HEK293 (cell line): ENCODE measurements at regions of chr19 and their contacts with region 1.

Region 1: GRCh38 chr19:30662211-30662861 is 290.2 kb downstream of the ZNF536 start:
- H3K4me3 ChIP-seq: peak overlapping the region; percentile 22
- H3K27ac ChIP-seq: no peak overlapping the region
- H3K4me1 ChIP-seq: peaks cover 34% of the 10 kb centered on the region
- CTCF ChIP-seq: no peak

Region 2: DNA sequence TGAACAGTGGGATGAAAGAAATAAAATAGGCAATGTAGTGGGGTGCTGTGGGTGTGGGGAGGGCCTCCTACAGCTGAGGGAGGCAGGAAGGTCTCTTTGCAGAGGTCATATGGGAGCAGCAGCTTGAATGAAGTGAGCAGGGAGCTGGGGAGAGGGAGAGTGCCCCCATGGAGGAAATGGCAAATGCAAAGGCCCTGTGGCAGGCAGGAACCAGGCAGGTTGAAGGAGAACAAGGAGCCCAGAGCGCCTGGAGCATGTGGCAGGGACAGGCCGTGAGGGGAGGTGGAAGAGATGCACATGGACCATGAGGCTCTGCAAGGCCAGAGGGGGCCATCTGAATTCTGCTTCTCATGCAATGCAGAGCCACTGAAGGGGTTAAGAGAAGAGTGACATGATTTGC is 528.5 kb before region 1 on chr19:
- CTCF ChIA-PET with region 1: interaction called, 15 read pairs
- POLR2A ChIA-PET with region 1: no interaction called
- H3K4me3 ChIP-seq: no peak overlapping the region
- H3K27ac ChIP-seq: no peak overlapping the region
- H3K4me1 ChIP-seq: no peaks in the 10 kb centered on the region
- CTCF ChIP-seq: no peak

Region 3: GRCh38 chr19:30649934-30650614 is 12.3 kb before region 1 on chr19:
- CTCF ChIA-PET with region 1: interaction called, 16 read pairs
- POLR2A ChIA-PET with region 1: interaction called, 3 read pairs
- H3K4me3 ChIP-seq: no peak overlapping the region
- H3K27ac ChIP-seq: no peak overlapping the region
- H3K4me1 ChIP-seq: peaks cover 4% of the 10 kb centered on the region; the same call in 1 of the 2 replicates
- CTCF ChIP-seq: peak; percentile 89